PC-9 (cell line): ENCODE measurements at regions of chr22 and their contacts with region 1.

Region 1: GRCh38 chr22:30538280-30538679 is 8.3 kb downstream of the SEC14L6 start:
- DNase-seq: no peak
- H3K4me3 ChIP-seq: no peak overlapping the region
- H3K27ac ChIP-seq: no peak overlapping the region
- H3K4me1 ChIP-seq: no peaks in the 10 kb centered on the region
- H3K27me3 ChIP-seq: no peaks in the 10 kb centered on the region
- CTCF ChIP-seq: no peak

Region 2: GRCh38 chr22:30324014-30324730 is 214.1 kb before region 1 on chr22:
- CTCF ChIA-PET with region 1: no interaction called
- POLR2A ChIA-PET with region 1: no interaction called
- intact Hi-C with region 1: no loop called
- DNase-seq: no peak
- H3K4me3 ChIP-seq: peak overlapping the region; percentile 97; the same call in 1 of the 2 replicates
- H3K27ac ChIP-seq: no peak overlapping the region
- H3K4me1 ChIP-seq: peaks cover 34% of the 10 kb centered on the region
- H3K27me3 ChIP-seq: no peaks in the 10 kb centered on the region
- CTCF ChIP-seq: no peak

Region 3: DNA sequence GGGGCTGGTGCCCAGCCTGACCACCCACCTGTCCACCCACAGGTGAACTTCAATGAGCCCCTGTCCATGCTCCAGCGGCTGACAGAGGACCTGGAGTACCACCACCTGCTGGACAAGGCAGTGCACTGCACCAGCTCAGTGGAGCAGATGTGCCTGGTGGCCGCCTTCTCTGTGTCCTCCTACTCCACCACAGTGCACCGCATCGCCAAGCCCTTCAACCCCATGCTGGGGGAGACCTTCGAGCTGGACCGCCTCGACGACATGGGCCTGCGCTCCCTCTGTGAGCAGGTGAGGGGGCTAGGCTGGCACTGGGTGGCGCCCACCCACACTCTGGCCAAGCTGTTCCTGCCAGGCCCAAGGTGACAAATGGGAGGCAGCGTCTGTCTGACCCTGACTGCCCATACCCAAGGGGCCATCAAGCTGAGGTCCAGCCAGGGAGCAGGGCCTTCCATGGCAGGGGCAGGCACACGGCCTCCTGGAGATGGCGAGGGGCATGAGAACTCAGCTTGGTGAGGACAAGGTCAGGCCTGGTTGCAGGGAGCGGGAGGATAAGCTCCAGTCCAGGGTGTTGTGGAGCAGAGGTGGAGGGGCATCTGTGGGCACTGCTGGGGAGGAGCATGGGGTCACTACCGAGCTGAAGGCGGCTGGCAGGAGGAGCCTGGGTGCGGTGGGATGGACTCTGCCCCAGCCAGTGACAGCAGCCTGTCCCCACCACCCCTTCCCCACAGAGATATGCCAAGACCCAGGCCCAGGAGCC is 352.6 kb after region 1 on chr22:
- CTCF ChIA-PET with region 1: no interaction called
- POLR2A ChIA-PET with region 1: interaction called, 17 read pairs
- intact Hi-C with region 1: no loop called
- DNase-seq: peak; percentile 34 to 41
- H3K4me3 ChIP-seq: no peak overlapping the region
- H3K27ac ChIP-seq: no peak overlapping the region
- H3K4me1 ChIP-seq: no peaks in the 10 kb centered on the region
- H3K27me3 ChIP-seq: no peaks in the 10 kb centered on the region
- CTCF ChIP-seq: peak; percentile 88